GM10248 (cell line): ENCODE measurements at regions of chr2 and their contacts with region 1.

Region 1: DNA sequence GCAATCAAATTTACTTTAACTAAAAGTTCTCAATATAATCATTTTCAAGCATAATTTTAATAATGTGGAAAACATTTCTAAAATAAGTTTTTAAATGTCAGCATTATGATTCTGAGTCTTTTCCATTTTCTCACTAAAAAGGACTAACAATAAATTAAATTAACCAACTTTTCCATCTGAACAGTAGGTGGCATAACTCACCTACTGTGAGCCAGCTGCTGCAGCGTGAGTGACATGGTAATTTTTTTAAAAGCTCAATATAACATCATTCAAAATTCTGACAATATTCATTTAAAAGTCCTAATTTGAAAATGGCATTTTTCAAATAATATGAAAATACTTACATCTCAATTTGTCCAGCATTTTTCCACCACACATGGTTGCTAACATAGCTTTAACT is 66.5 kb downstream of the DTNB start:
- DNase-seq: peak; percentile 22
- CTCF ChIP-seq: peak; percentile 45

Region 2: DNA sequence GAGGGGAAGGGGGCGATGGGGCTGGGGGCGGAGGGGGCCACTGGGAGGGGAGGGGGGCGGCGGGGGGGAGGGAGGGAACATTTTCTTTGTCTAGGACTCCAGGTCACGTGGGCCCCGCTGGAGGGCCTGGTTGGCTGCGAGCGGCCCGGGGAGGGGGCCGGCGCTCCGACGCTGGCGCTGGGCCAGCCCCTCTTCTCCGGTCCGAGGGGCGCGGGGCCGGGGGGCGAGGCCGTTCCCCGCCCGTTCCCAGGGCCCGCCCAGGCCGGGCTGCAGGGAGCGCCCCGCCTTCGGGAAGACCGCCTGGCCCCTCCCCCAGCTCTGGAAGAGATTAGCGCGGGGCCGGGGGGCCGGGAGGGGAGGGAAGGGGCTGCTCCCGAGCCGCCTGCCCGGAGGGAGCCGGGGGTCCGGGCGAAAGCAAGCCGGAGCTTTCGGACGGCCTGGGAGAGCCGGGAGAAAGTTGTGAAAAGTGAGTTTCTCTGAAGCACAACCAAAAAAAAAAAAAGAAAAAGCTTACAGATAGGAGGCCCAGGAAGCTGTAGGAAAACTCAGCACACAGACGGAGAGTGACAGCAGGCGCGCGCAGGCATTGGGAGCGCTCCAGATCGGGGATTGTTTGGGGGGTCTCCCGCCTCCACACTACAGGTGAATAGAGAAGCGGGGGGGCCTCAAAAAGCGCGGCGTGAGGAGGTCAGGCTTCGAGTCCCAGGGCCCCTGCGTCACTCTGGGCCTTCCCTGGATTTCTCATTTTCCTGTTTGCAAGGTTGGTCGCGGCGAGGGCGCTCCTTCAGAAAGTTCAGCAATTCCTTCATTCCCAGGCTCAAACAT is 354.4 kb before region 1 on chr2:
- CTCF ChIA-PET with region 1: no interaction called
- POLR2A ChIA-PET with region 1: no interaction called
- DNase-seq: peak; percentile 91
- CTCF ChIP-seq: no peak

Region 3: DNA sequence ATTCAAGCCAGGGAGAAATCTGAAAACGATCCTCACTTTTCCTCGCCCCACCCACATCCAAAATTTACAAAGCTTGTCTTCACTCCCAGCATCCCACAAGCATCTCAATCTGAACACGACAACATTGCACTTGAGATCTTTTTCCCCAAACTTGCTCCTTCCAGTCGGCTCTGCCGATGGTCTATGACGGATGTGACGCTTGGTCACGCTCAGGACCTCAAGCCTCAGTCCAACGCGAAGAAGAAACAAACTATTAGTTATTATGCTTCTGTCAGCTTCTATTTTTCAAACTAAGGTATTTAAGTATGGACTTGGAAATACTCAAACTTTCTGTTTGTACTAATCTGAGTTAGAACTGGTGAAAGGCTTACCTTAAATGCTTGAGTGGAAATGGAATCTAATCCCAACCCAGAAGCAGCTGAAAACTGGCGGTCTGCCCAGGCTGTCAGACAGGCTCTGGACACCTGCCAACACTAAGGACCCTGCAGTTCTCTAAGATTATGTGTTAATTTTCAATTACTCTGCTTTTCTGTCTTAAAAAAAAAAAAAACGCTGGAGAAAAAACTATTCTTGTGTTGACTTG is 133.0 kb before region 1 on chr2:
- CTCF ChIA-PET with region 1: no interaction called
- POLR2A ChIA-PET with region 1: no interaction called
- DNase-seq: no peak
- CTCF ChIP-seq: no peak

Region 4: DNA sequence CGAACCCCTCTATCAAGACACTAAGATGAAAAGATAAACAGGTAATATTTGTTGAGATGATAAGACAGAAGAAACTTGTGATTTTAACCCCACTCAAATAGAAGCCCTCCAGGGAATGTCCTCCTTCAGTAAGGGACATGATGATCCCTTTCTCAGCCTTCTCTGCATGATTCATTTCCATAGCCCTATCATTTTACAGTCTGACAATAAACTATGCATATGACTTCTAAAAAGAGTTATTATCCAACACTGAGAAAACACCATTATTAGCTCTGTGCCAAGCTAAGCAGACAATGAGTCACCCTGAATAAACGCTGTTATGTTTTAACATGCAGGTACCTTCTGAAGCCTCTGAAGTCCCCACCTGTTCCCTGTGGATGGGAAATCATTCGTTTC is 11.7 kb after region 1 on chr2:
- CTCF ChIA-PET with region 1: interaction called, 13 read pairs
- POLR2A ChIA-PET with region 1: no interaction called
- DNase-seq: no peak
- CTCF ChIP-seq: no peak

Region 5: DNA sequence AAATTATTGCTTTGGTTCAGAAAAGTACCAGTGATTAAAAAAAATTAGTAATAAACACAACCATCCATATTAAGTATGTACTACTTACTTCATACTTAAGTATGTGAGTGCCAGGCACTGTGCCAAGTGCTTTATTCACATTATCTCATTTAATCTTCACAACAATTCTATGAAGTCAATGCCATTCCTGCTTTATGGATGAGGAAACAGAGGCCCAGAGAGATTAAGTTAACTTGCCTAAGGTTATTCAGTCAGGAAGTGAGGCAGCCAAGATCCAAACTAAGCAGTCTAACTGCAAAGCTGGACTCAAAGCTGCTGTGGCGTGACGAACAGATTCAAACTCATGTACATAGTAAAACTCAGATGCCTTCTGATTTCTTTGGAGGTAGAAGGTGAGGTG is 44.2 kb after region 1 on chr2:
- CTCF ChIA-PET with region 1: interaction called, 14 read pairs
- POLR2A ChIA-PET with region 1: no interaction called
- DNase-seq: no peak
- CTCF ChIP-seq: no peak

Region 6: GRCh38 chr2:25740810-25741381 is 134.0 kb after region 1 on chr2:
- CTCF ChIA-PET with region 1: no interaction called
- POLR2A ChIA-PET with region 1: no interaction called
- DNase-seq: no peak
- CTCF ChIP-seq: no peak